ENCODE measurements at regions of chr17 and their contacts with region 1.

Region 1: GRCh38 chr17:45092932-45093430 is 31.9 kb downstream of the NMT1 start:
- DNase-seq: peak; percentile 97
- H3K4me3 ChIP-seq: no peak overlapping the region
- H3K27ac ChIP-seq: peak overlapping the region; percentile 85 to 95 (median 90)
- H3K4me1 ChIP-seq: peaks cover 0 to 46% (median 38%) of the 10 kb centered on the region in 4 donors
- H3K27me3 ChIP-seq: no peaks in the 10 kb centered on the region
- CTCF ChIP-seq: no peak
- EP300 ChIP-seq: peak in 2 of 4 donors; percentile 33 to 84
- POLR2A ChIP-seq: no peak

Region 2: GRCh38 chr17:45051060-45051719 is 41.8 kb before region 1 on chr17 and contains the start of gene DCAKD:
- intact Hi-C with region 1: loop called (anchors 5 kb)
- DNase-seq: peak; percentile 97
- H3K4me3 ChIP-seq: peak within 1 kb of the TSS; percentile 45 to 69 (median 60)
- H3K27ac ChIP-seq: peak within 1 kb of the TSS; percentile 88 to 95 (median 92)
- H3K4me1 ChIP-seq: peaks cover 0 to 30% (median 17%) of the 10 kb centered on the region in 4 donors
- H3K27me3 ChIP-seq: no peaks in the 10 kb centered on the region
- CTCF ChIP-seq: no peak
- EP300 ChIP-seq: no peak
- POLR2A ChIP-seq: peak in 1 of 2 donors; percentile 67
- total RNA-seq, gene DCAKD: 25.2 to 46.0 (median 31.9) TPM

Region 3: GRCh38 chr17:45060797-45061605 is 32.0 kb before region 1 on chr17 and contains the start of gene NMT1:
- intact Hi-C with region 1: loop called (anchors 2 kb)
- DNase-seq: peak; percentile 99
- H3K4me3 ChIP-seq: peak within 1 kb of the TSS; percentile 66 to 73 (median 72)
- H3K27ac ChIP-seq: peak within 1 kb of the TSS; percentile 90 to 93 (median 92)
- H3K4me1 ChIP-seq: peaks cover 0 to 59% (median 49%) of the 10 kb centered on the region in 4 donors
- H3K27me3 ChIP-seq: no peaks in the 10 kb centered on the region
- CTCF ChIP-seq: no peak
- EP300 ChIP-seq: no peak
- POLR2A ChIP-seq: peak; percentile 90 to 92
- total RNA-seq, gene NMT1: 41.0 to 59.2 (median 55.6) TPM

Measured in sigmoid colon (tissue), 7 donors.